ENCODE measurements at regions of chrX and their contacts with region 1.

Region 1: DNA sequence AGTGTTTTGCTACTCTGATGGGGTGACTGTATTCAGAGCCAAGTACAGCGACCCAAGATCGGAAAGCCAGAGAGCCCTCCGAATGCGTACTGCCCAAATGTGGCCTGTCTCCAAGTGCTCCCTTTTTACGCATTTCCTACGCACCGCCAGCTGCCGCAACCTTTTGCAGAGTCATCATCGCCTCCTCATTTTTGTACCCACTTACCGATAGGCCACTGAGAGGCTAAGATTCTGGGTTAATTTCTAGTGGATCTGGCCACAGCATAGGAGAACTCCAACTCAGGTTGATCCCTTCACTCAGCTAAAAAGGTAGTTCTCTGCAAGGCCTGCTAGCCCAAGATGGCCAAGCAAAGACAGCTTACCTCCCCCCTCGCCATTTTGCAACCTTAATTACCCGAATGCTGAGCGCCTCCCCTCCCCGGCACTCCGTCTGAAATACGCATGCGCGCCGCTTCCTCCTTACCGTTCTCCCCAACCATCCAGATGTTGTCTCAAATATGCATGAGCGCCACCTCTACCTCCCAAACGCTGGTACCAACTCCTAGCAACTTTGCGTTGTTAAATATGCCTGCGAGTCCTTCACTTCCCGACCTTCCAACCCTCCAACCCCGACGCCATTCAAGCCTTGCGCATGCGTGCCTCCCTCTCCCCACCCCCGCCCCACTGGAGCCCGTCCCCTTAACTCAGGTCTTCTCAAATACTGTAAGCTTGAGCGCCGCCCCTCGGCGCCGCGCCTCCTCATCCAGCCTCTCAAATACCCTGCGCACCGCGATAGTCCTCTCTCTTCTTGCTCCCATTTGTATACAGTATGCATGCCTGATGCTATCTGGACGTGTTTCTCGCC is 11.8 kb upstream of the ZCCHC13 start:
- DNase-seq: peak; percentile 87 to 92
- ATAC-seq: peak; percentile 90 to 92 (median 90)
- H3K4me3 ChIP-seq: peak overlapping the region; percentile 84
- H3K27ac ChIP-seq: peak overlapping the region; percentile 89
- H3K4me1 ChIP-seq: no peaks in the 10 kb centered on the region
- H3K27me3 ChIP-seq: peaks cover 0 to 13% (median 0%) of the 10 kb centered on the region in 3 donors
- CTCF ChIP-seq: no peak

Region 2: GRCh38 chrX:74343343-74344279 is 51.4 kb after region 1 on chrX:
- intact Hi-C with region 1: loop called in 1 of 2 experiments (anchors 5 kb)
- DNase-seq: no peak
- ATAC-seq: peak; percentile 81 to 90 (median 87)
- H3K4me3 ChIP-seq: no peak overlapping the region
- H3K27ac ChIP-seq: no peak overlapping the region
- H3K4me1 ChIP-seq: no peaks in the 10 kb centered on the region
- H3K27me3 ChIP-seq: no peaks in the 10 kb centered on the region
- CTCF ChIP-seq: peak; percentile 65